H1 (cell line): ENCODE measurements at regions of chr1 and their contacts with region 1.

Region 1: GRCh38 chr1:15100121-15100874 is 53.2 kb upstream of the TMEM51 start:
- DNase-seq: peak; percentile 36 to 89
- H3K4me3 ChIP-seq: no peak overlapping the region
- H3K27ac ChIP-seq: no peak overlapping the region
- H3K4me1 ChIP-seq: peaks cover 0 to 9% (median 5%) of the 10 kb centered on the region in 4 experiments; a peak in 5 of 7 replicates
- H3K27me3 ChIP-seq: peaks cover 0 to 4% (median 2%) of the 10 kb centered on the region in 4 experiments; a peak in 3 of 7 replicates
- CTCF ChIP-seq: peak; percentile 93 to 100 (median 99)
- EP300 ChIP-seq: no peak; a peak in 1 of 3 replicates
- POLR2A ChIP-seq: no peak
- RAD21 ChIP-seq: peak; percentile 98 to 99

Region 2: DNA sequence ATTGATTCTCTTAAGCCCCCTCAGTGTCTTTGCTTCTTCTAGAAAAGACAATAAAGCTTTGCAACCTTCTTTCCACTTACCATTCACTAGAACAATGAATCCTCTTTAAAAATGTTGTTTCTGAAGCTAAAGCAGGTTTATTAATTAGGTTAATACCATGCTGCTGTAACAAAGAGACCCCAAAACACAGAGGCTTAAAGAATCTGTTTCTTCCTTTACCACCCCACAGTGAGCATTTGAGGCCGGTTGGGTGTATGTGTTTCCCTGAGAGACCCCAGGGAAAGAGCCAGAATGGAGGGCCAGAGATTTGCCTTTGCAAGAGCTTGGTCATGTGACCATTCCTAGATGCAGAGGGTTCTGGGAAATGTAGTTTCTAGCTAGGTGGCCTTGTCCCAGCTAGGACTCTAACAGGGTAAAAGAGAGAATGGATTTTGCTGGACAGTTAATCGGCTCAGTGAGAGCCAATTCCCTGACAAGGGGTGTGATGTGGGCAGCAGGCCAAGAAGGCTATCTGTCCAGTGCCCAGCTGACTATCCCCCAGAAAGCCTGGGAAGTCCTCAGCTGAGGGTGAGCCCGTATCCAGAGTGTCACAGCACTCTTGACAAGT is 138.5 kb before region 1 on chr1:
- CTCF ChIA-PET with region 1: no interaction called
- POLR2A ChIA-PET with region 1: no interaction called
- DNase-seq: no peak
- H3K4me3 ChIP-seq: no peak overlapping the region
- H3K27ac ChIP-seq: no peak overlapping the region
- H3K4me1 ChIP-seq: peaks cover 0 to 3% (median under 1%) of the 10 kb centered on the region in 4 experiments; a peak in 2 of 7 replicates
- H3K27me3 ChIP-seq: no peaks in the 10 kb centered on the region
- CTCF ChIP-seq: no peak
- EP300 ChIP-seq: no peak
- POLR2A ChIP-seq: no peak
- RAD21 ChIP-seq: no peak

Region 3: GRCh38 chr1:15038232-15039016 is 61.9 kb before region 1 on chr1:
- CTCF ChIA-PET with region 1: interaction called, 21 read pairs
- POLR2A ChIA-PET with region 1: no interaction called
- DNase-seq: no peak
- H3K4me3 ChIP-seq: no peak overlapping the region
- H3K27ac ChIP-seq: no peak overlapping the region
- H3K4me1 ChIP-seq: no peaks in the 10 kb centered on the region
- H3K27me3 ChIP-seq: no peaks in the 10 kb centered on the region
- CTCF ChIP-seq: peak; percentile 51 to 75 (median 65)
- EP300 ChIP-seq: no peak
- POLR2A ChIP-seq: no peak
- RAD21 ChIP-seq: peak; percentile 53 to 57

Region 4: GRCh38 chr1:15056515-15057285 is 43.6 kb before region 1 on chr1:
- CTCF ChIA-PET with region 1: interaction called, 32 read pairs
- POLR2A ChIA-PET with region 1: no interaction called
- DNase-seq: no peak
- H3K4me3 ChIP-seq: no peak overlapping the region
- H3K27ac ChIP-seq: no peak overlapping the region
- H3K4me1 ChIP-seq: peaks cover 0 to 14% (median 10%) of the 10 kb centered on the region in 4 experiments; a peak in 6 of 7 replicates
- H3K27me3 ChIP-seq: no peaks in the 10 kb centered on the region
- CTCF ChIP-seq: no peak
- EP300 ChIP-seq: no peak
- POLR2A ChIP-seq: no peak
- RAD21 ChIP-seq: no peak

Region 5: GRCh38 chr1:15070145-15070748 is 30.1 kb before region 1 on chr1:
- CTCF ChIA-PET with region 1: interaction called, 12 read pairs
- POLR2A ChIA-PET with region 1: interaction called, 3 read pairs
- DNase-seq: no peak
- H3K4me3 ChIP-seq: no peak overlapping the region
- H3K27ac ChIP-seq: no peak overlapping the region
- H3K4me1 ChIP-seq: no peaks in the 10 kb centered on the region
- H3K27me3 ChIP-seq: no peaks in the 10 kb centered on the region
- CTCF ChIP-seq: no peak
- EP300 ChIP-seq: no peak
- POLR2A ChIP-seq: no peak
- RAD21 ChIP-seq: no peak

Region 6: DNA sequence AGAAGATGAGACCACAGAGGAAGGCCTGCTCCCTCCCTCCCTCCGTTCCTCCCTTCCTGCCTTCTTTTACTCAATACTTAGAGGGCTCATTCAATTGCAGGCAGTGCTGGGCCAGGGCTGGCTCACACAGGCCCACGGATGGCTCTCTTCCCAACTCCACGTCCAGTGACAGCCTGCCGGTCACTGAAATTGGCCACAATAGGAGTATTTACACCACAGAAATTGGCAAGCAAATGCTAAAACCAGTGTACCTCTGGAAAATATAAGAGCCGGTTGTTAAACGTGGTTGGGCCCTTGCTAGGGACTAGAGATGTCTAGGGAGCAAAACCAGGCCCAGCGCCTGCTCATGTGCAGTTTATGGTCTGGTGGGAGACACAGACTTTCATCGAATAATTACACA is 19.2 kb before region 1 on chr1:
- CTCF ChIA-PET with region 1: interaction called, 14 read pairs
- POLR2A ChIA-PET with region 1: no interaction called
- DNase-seq: no peak
- H3K4me3 ChIP-seq: no peak overlapping the region
- H3K27ac ChIP-seq: no peak overlapping the region
- H3K4me1 ChIP-seq: no peaks in the 10 kb centered on the region
- H3K27me3 ChIP-seq: no peaks in the 10 kb centered on the region
- CTCF ChIP-seq: no peak
- EP300 ChIP-seq: no peak
- POLR2A ChIP-seq: no peak
- RAD21 ChIP-seq: no peak

Region 7: GRCh38 chr1:15188130-15188524 is 87.8 kb after region 1 on chr1:
- CTCF ChIA-PET with region 1: no interaction called
- POLR2A ChIA-PET with region 1: no interaction called
- DNase-seq: no peak
- H3K4me3 ChIP-seq: no peak overlapping the region
- H3K27ac ChIP-seq: no peak overlapping the region
- H3K4me1 ChIP-seq: peaks cover 15 to 37% (median 20%) of the 10 kb centered on the region in 4 experiments
- H3K27me3 ChIP-seq: no peaks in the 10 kb centered on the region
- CTCF ChIP-seq: no peak
- EP300 ChIP-seq: no peak
- POLR2A ChIP-seq: no peak
- RAD21 ChIP-seq: no peak